Activated CD4-positive, alpha-beta T cell treated with anti-CD3 and anti-CD28 coated beads for 36 hours (primary cell): ENCODE measurements at regions of chr19 and their contacts with region 1.

Region 1: DNA sequence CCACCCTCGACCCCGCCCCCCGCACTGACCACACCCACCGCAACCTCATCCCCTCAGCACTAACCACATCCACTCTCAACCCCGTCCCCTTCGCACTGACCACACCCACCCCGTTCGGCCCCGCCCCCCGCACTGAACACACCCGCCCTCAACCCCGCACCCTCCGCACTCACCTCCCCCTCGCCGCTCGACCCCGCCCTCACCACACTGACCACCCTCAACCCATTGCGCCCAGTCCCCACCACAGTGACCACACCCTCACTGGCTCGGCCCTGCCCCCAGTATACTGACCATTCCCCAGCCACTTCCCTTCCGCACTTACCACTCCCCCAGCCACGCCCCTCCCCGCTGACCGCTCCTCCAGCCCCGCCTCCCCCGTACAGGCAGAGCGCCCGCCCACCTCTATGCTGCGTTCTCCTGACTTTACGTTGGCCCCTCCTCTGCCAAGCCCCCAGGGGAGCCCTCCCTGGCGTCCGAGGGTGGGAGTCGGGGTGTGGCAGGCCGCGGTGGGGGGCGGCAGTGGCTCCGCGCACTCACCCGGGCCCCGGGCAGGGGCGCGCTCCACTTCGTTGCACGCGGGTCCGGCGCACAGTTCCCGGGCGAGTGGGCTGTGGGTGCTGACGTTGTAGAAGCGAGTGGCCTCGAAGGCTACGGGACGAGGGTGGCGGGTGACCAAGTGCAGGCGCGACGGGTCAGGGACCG is 8.5 kb downstream of the F2RL3 start:
- DNase-seq: peak; percentile 75
- ATAC-seq: peak; percentile 53
- H3K4me3 Mint-ChIP-seq: no peak overlapping the region
- H3K27ac Mint-ChIP-seq: no peak overlapping the region
- H3K4me1 Mint-ChIP-seq: peaks cover 16% of the 10 kb centered on the region
- H3K27me3 Mint-ChIP-seq: peaks cover 26% of the 10 kb centered on the region

Region 2: DNA sequence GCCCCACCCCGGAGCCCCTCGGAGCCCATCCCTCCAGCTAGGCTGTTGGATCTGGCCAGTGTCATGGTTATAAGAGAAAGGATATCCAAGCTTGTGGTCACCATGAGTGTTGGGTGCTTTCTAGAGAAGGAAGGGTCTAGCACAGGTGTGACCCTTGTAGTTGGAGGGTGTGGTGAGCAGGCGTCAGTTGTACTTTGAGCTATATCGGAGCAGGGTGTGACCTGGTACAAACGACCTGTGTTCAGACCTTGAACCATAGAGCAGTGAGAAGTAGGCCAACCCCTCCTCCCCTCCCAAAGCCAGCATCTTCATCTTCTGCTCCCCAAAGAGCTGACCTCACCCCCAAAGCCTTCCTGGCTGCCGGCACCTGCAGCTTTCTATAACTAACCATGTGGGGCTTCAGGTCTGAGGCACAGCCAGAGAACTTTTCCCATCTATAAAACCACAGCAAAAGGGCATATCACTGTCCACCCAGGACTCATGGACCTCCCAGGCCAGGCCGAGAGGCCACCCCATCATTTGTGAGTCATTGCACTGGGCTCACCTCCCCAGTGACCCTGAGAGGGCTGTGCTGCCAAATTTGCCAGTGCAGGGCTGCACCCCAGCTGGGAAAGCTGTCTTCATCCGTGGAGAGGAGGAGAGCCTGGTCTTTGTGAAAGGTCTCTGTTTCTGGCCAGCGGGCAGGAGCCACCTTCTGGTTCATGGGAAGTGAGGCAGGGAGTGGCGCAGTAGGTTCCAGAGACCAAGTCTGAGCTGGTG is 771.4 kb before region 1 on chr19:
- CTCF ChIA-PET with region 1: no interaction called
- POLR2A ChIA-PET with region 1: no interaction called
- intact Hi-C with region 1: no loop called
- DNase-seq: no peak
- ATAC-seq: no peak
- H3K4me3 Mint-ChIP-seq: no peak overlapping the region
- H3K27ac Mint-ChIP-seq: no peak overlapping the region
- H3K4me1 Mint-ChIP-seq: no peaks in the 10 kb centered on the region
- H3K27me3 Mint-ChIP-seq: no peaks in the 10 kb centered on the region

Region 3: DNA sequence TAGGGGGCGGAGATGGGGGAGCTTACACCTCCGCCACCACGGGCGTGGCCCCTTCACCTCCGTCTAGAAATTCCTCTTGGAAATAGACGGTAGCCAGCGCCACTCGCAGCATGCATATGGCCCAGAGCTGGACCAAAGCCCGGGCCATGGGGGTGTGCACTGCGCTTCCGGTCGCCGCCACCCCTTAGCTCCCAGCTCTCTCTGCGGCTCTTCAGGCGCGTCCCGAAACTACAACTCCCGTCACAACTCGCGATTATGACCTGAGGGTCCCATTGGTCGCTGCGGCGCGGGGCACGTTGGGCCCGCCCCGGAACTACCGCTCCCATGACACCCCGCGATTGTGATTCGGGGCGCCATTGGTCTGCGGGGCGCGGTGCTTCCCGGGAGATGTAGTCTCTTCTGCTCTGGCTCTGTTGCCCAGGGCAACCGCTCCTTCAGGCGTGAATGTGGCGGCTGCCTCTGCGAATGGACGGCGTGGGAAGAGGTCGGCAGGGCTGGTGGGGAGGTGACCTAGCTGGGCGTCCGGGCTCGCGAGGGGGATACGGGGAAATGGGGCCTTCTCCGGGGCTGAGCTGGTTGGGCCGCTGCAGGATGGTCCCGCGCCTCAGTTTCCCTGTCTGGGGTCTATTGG is 401.2 kb before region 1 on chr19 and contains the starts of genes C19orf44 and CALR3:
- CTCF ChIA-PET with region 1: no interaction called
- POLR2A ChIA-PET with region 1: no interaction called
- intact Hi-C with region 1: loop called in 1 of 2 experiments (anchors 1 kb)
- DNase-seq: peak; percentile 99
- ATAC-seq: peak; percentile 99
- H3K4me3 Mint-ChIP-seq: peak within 1 kb of the TSS; percentile 89
- H3K27ac Mint-ChIP-seq: peak within 1 kb of the TSS; percentile 79
- H3K4me1 Mint-ChIP-seq: peaks cover 13% of the 10 kb centered on the region
- H3K27me3 Mint-ChIP-seq: no peaks in the 10 kb centered on the region
- total RNA-seq, gene C19orf44: 2.9 to 4.0 TPM
- total RNA-seq, gene CALR3: not detected

Region 4: GRCh38 chr19:16771618-16772017 is 125.7 kb before region 1 on chr19:
- CTCF ChIA-PET with region 1: interaction called, 3 read pairs
- POLR2A ChIA-PET with region 1: no interaction called
- intact Hi-C with region 1: loop called (anchors 1 to 10 kb)
- DNase-seq: peak; percentile 86
- ATAC-seq: peak; percentile 77
- H3K4me3 Mint-ChIP-seq: no peak overlapping the region
- H3K27ac Mint-ChIP-seq: no peak overlapping the region
- H3K4me1 Mint-ChIP-seq: no peaks in the 10 kb centered on the region
- H3K27me3 Mint-ChIP-seq: peaks cover 35% of the 10 kb centered on the region

Region 5: GRCh38 chr19:17172624-17173342 is 275.5 kb after region 1 on chr19:
- CTCF ChIA-PET with region 1: no interaction called
- POLR2A ChIA-PET with region 1: no interaction called
- intact Hi-C with region 1: no loop called
- DNase-seq: no peak
- ATAC-seq: no peak
- H3K4me3 Mint-ChIP-seq: no peak overlapping the region
- H3K27ac Mint-ChIP-seq: no peak overlapping the region
- H3K4me1 Mint-ChIP-seq: peaks cover 11% of the 10 kb centered on the region
- H3K27me3 Mint-ChIP-seq: no peaks in the 10 kb centered on the region

Region 6: DNA sequence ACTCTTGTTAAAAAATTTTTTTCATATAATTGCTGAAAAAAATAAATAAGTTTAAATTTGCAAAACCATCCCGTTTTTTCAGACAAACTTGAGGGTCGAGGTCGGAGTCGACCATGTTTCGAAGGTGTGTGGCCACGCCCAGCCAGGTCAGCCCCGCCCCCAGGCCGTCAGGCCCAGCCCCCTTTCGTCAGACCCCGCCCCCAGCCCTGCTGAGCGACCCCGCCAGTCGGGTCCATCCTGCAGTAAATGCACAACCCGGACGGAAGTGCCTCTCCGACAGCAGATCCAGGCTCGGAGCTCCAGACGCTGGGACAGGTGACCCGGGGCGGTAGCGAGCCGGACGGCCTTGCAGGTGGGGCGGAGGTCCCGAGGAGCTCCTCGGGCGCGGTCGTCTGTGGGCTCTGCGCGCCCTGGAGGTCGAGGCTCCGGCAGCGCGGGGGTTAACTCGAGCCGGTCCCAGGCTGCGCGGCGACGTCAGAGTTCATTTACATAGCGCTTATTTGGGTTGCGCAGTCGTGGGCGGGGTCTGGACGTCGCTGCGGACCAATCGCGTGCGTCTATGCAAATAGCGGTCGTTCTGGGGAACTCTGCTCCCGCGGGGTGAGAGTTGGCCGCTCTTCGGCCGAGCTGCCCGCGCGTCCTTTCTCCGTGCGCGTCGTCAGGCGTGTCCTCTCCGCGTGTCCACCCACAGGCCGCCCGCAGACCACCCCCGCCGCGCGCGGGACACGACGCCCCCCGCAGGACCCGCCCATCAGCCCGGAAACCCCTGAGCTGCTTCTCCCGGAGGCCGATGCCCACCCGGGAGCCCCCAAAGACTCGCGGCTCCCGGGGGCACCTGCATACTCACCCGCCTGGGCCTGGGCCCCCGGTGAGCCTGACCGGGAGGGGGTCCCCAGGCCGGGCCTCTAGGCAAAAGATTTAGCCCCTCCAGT is 329.0 kb after region 1 on chr19 and contains the start of gene OCEL1:
- CTCF ChIA-PET with region 1: no interaction called
- POLR2A ChIA-PET with region 1: no interaction called
- intact Hi-C with region 1: loop called in 1 of 2 experiments (anchors 1 kb)
- DNase-seq: peak; percentile 99
- ATAC-seq: peak; percentile 92
- H3K4me3 Mint-ChIP-seq: peak within 1 kb of the TSS; percentile 80
- H3K27ac Mint-ChIP-seq: peak within 1 kb of the TSS; percentile 93
- H3K4me1 Mint-ChIP-seq: peaks cover 7% of the 10 kb centered on the region
- H3K27me3 Mint-ChIP-seq: no peaks in the 10 kb centered on the region
- total RNA-seq, gene OCEL1: 10.9 to 11.7 TPM